Right ventricle myocardium superior (tissue), 1 donor: ENCODE measurements at regions of chr11 and their contacts with region 1.

Region 1: GRCh38 chr11:46693597-46694012 is 6.8 kb downstream of the ARHGAP1 start:
- DNase-seq: no peak
- ATAC-seq: no peak

Region 2: DNA sequence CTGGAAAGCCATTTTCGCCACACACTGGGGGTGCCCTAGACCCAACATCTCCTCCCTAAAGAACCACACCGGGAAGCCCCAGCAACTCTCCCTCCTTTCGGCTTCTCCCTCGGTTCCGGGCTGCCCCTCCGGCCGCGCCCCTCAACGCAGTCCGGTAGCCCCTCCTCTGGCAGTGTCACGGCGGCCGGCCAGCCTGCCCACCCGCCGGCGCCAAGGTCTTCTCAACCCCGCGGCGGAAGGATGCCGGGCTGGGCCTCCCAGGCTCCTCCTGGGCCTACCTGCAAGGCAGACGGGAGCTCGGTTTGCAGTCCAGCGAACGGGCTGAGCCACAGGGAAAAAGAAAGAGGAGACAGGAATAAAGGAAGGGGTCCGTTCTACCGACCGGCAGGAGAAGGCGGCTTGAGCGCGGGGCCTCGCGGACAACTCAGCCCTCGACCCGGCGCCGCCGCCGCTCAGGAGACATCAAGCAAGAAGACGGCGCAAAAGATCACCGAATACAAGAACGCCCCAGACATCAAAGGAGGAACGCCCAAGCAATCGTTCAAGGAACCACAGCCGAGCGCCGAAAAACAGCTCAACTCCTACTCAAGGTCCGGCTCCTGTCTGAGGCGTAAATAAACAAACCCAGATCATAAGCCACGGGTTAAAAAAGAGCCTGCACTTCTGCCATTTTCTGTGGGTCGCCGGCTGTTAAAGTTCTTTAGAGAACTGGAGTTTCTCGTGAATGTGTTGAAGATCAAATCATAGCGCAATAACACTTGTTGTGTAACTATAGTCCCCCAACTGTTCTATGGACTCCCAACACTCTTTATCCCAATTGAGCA is 99.8 kb before region 1 on chr11 and contains the start of gene AMBRA1:
- intact Hi-C with region 1: no loop called
- DNase-seq: peak; percentile 92
- ATAC-seq: peak; percentile 94
- total RNA-seq, gene AMBRA1: 12.3 TPM

Region 3: DNA sequence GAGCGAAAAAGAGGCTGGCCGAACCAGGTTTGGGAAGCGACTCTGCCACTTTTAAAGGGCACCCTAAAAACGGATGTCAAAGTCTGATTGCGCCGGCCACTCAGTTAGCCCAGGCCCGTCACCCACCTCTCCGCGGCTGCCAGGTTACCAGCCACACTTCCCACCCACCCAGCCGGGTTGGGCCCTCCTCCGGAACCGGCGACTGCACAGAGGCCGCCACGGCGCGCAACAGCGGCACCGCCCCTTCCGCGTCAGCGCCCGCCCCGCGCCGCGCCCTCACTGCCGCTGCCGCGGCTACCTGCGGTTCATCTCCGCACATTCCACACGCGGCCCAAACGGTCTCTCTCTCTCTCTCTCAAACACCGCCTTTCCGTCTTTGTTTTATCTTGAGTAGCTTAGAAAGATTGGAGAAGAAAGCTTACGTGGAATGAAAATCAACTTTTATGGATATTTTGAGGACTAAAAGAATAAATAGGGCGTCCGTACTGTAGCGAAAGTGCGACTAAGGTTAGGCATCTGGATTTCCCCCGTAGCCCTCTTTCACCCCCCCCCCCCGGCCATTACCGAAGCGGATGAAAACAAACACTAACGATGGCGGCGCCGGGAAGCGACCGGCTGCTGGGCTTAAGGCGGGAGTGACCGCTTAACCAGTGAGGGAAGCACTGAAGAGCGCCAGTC is 76.5 kb before region 1 on chr11 and contains the starts of genes ATG13 and HARBI1:
- intact Hi-C with region 1: loop called (anchors 10 kb)
- DNase-seq: peak; percentile 94
- ATAC-seq: peak; percentile 99
- total RNA-seq, gene ATG13: 37.4 TPM
- total RNA-seq, gene HARBI1: 1.9 TPM

Region 4: GRCh38 chr11:46936138-46937110 is 242.8 kb after region 1 on chr11 and contains the start of gene CSTPP1:
- intact Hi-C with region 1: no loop called
- DNase-seq: peak; percentile 95
- ATAC-seq: peak; percentile 98
- total RNA-seq, gene CSTPP1: 10.0 TPM